ENCODE measurements at regions of chr15 and their contacts with region 1.

Region 1: GRCh38 chr15:63374686-63375520 is 6.7 kb downstream of the CA12 start:
- DNase-seq: no peak
- ATAC-seq: no peak
- H3K4me3 ChIP-seq: no peak overlapping the region
- H3K27ac ChIP-seq: no peak overlapping the region
- H3K4me1 ChIP-seq: peaks cover 3 to 7% of the 10 kb centered on the region in 2 donors
- H3K27me3 ChIP-seq: peaks cover 8 to 11% (median 11%) of the 10 kb centered on the region in 3 donors
- CTCF ChIP-seq: no peak
- POLR2A ChIP-seq: no peak

Region 2: DNA sequence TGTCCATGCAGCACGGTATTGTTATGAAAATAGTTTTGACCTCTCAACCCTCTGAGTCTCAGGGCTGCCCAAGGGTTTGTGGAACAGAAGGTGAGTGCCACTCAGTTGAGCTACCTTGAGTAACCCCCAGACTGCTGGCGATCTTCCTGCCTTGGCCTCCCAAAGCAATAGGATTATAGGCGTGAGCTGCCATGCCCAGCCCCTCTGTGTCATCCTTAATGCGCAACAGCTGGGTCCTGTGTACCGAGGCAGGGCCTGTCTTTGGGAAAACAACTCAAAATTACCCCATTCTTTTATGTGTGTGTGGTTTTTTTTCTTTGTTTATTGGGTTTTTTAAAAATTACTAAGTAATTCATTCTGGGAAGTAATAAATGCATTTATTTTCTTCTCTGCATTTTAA is 410.7 kb before region 1 on chr15:
- in situ Hi-C with region 1: no loop called
- intact Hi-C with region 1: no loop called
- DNase-seq: peak in 1 of 2 donors; percentile 61
- ATAC-seq: peak in 1 of 2 donors; percentile 64
- H3K4me3 ChIP-seq: no peak overlapping the region
- H3K27ac ChIP-seq: no peak overlapping the region
- H3K4me1 ChIP-seq: peaks cover 3 to 5% of the 10 kb centered on the region in 2 donors
- H3K27me3 ChIP-seq: no peaks in the 10 kb centered on the region
- CTCF ChIP-seq: no peak
- POLR2A ChIP-seq: no peak

Region 3: GRCh38 chr15:63172376-63173109 is 202.4 kb before region 1 on chr15:
- in situ Hi-C with region 1: no loop called
- intact Hi-C with region 1: no loop called
- DNase-seq: peak; percentile 90 to 93
- ATAC-seq: peak; percentile 87 to 94
- H3K4me3 ChIP-seq: no peak overlapping the region
- H3K27ac ChIP-seq: peak overlapping the region; percentile 90 to 95 (median 92)
- H3K4me1 ChIP-seq: peaks cover 27 to 48% of the 10 kb centered on the region in 2 donors
- H3K27me3 ChIP-seq: no peaks in the 10 kb centered on the region
- CTCF ChIP-seq: no peak
- POLR2A ChIP-seq: peak; percentile 15 to 43

Region 4: DNA sequence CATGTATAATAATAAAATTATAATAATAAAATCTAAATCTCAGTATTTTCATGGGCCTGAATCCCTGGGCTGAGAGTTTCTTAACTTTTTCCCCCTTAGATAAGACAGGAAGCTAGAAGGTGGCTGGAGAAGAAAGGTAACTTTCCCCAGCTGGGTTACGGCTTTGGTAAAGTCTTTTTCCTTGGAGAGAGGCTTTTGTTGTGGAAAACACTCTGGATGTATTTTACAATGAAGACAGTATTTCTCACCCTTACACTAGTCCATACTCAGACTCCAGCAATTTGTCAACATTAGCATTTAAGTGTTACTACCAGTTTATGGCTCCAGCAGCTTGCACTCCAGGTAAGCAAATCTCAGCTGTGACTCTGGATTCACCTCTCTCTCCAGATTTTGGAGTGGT is 62.6 kb before region 1 on chr15:
- in situ Hi-C with region 1: no loop called
- intact Hi-C with region 1: loop called (anchors 5 kb)
- DNase-seq: no peak
- ATAC-seq: no peak
- H3K4me3 ChIP-seq: no peak overlapping the region
- H3K27ac ChIP-seq: no peak overlapping the region
- H3K4me1 ChIP-seq: no peaks in the 10 kb centered on the region
- H3K27me3 ChIP-seq: no peaks in the 10 kb centered on the region
- CTCF ChIP-seq: no peak
- POLR2A ChIP-seq: no peak

Measured in gastrocnemius medialis (tissue), 4 donors.